ENCODE measurements at regions of chr17 and their contacts with region 1.

Region 1: DNA sequence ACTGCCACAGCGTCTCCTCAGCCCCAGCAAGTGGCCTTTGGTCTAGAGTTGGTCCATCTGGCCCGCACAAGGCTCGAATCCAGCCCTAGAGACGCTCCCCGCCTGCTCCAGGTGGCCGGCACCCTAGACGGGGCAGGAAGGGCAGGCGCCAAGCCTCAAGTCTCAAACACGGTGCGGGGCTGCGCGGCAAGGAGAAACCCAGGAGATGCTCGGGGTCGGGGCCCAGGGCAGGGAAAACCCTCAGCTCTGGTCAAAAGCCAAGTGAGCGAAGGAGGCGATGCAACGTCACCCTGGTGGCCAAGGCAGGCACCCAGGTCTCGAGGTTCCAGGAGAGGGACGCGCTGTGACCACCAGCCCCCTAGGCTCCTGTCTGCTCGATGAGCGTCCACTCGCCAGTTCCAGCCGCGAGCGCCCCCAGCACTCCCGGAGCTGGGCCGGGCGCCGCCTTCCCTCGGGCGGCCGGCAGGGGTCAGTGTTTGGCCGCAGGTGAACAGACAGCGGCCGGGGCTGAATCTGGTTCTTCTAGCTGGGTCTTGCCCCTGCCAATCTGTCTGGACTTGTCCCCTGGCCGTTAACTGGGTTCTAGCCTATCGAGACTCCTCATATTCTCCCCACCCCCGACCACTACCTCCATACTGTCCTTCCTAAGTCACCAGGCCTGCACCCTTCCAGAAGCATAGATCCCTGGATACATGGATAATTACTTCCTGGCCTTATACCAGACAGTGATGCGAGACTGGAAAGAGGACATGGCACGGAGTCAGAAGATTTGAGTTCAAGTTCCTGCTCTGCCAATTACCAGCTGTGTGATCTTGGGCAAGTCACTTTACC is 44.0 kb downstream of the PRAC1 start:
- H3K4me3 ChIP-seq: no peak overlapping the region
- H3K27ac ChIP-seq: no peak overlapping the region
- H3K4me1 ChIP-seq: no peaks in the 10 kb centered on the region
- CTCF ChIP-seq: peak; percentile 98

Region 2: GRCh38 chr17:48561884-48562810 is 116.2 kb before region 1 on chr17:
- CTCF ChIA-PET with region 1: no interaction called
- POLR2A ChIA-PET with region 1: no interaction called
- H3K4me3 ChIP-seq: no peak overlapping the region
- H3K27ac ChIP-seq: peak overlapping the region; percentile 76
- H3K4me1 ChIP-seq: peaks cover 88% of the 10 kb centered on the region
- CTCF ChIP-seq: peak; percentile 29; the same call in 1 of the 2 replicates

Region 3: GRCh38 chr17:48663134-48663924 is 15.0 kb before region 1 on chr17:
- CTCF ChIA-PET with region 1: interaction called, 36 read pairs
- POLR2A ChIA-PET with region 1: no interaction called
- H3K4me3 ChIP-seq: no peak overlapping the region
- H3K27ac ChIP-seq: no peak overlapping the region
- H3K4me1 ChIP-seq: no peaks in the 10 kb centered on the region
- CTCF ChIP-seq: no peak

Region 4: GRCh38 chr17:48704361-48705248 is 26.2 kb after region 1 on chr17:
- CTCF ChIA-PET with region 1: interaction called, 15 read pairs
- POLR2A ChIA-PET with region 1: no interaction called
- H3K4me3 ChIP-seq: no peak overlapping the region
- H3K27ac ChIP-seq: no peak overlapping the region
- H3K4me1 ChIP-seq: no peaks in the 10 kb centered on the region; the same call in 1 of the 2 replicates
- CTCF ChIP-seq: no peak

Region 5: DNA sequence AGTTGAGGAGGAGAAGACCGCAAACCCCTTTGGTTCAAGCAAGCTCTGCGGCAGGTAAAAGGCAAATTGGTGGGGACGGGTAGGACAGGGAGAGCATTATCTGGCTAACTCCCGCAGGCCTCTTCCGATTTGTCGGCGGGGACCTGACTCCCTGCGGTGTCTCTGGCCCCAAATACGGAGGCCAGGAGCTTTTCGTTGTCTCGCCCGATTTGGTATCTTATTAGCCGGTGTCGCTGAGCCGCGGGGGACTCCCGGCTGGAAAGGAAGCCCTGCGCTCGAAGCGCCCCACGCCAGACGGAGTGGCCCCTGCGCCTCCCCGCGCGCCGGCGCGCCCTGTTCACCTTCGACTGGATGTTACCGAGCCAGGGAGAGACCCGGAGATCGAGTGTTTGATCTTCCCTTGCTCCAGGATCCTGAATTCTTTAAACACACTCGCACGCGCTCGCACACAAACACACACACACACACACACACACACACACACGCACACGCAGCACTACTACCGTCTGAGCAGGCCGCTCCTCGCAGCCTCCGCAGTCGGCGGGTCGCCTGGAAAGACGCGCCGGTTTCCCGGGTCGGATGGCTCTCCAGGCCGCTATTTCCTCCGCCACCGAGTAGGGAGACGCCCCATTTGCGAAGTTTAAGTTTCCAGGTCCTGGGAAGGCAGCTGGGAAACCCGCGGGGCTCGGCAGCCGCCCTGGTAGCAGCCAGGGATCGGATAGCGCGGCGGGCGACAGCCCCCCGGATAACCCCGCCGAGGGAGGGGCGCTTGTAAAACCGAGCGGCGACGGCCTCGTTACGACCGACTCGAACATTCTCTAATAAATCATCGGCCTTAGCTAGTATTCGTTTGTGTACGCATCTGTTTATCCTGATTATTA is 40.6 kb after region 1 on chr17:
- CTCF ChIA-PET with region 1: interaction called, 118 read pairs
- POLR2A ChIA-PET with region 1: no interaction called
- H3K4me3 ChIP-seq: peak overlapping the region; percentile 32
- H3K27ac ChIP-seq: no peak overlapping the region
- H3K4me1 ChIP-seq: no peaks in the 10 kb centered on the region
- CTCF ChIP-seq: no peak

Region 6: GRCh38 chr17:48732688-48733629 is 54.6 kb after region 1 on chr17:
- CTCF ChIA-PET with region 1: interaction called, 118 read pairs
- POLR2A ChIA-PET with region 1: interaction called, 6 read pairs
- H3K4me3 ChIP-seq: no peak overlapping the region
- H3K27ac ChIP-seq: no peak overlapping the region
- H3K4me1 ChIP-seq: peaks cover 7% of the 10 kb centered on the region
- CTCF ChIP-seq: no peak

Region 7: DNA sequence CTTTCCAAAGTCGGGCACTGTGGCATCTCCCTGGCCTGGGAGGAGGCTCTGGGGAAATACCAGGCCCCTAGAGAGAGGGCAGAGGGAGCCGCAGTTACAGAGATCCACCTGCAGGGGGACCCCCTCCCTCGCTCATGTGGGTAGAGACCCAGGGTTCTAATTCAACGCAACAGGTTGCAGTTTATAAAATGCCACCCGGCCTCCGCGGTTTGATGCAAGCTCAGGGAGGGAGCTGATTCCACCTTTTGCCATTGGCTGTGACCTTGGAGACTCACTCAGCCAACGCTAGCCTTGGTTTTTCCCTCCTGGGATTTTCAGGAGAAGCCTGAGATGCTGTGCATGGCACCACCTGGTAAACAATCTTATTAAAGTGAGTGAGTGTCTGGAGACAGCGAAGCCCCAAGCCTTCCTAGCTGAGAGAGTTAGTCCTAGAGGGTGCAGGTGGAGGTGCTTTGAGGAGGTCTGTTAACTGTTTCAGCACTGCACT is 126.6 kb after region 1 on chr17:
- CTCF ChIA-PET with region 1: interaction called, 40 read pairs
- POLR2A ChIA-PET with region 1: no interaction called
- H3K4me3 ChIP-seq: no peak overlapping the region
- H3K27ac ChIP-seq: no peak overlapping the region
- H3K4me1 ChIP-seq: peaks cover 4% of the 10 kb centered on the region
- CTCF ChIP-seq: peak; percentile 76

Region 8: GRCh38 chr17:48871551-48872351 is 193.4 kb after region 1 on chr17:
- CTCF ChIA-PET with region 1: interaction called, 365 read pairs
- POLR2A ChIA-PET with region 1: no interaction called
- H3K4me3 ChIP-seq: no peak overlapping the region
- H3K27ac ChIP-seq: no peak overlapping the region
- H3K4me1 ChIP-seq: no peaks in the 10 kb centered on the region
- CTCF ChIP-seq: no peak

Measured in HEK293 (cell line).